ENCODE measurements at regions of chr22 and their contacts with region 1.

Region 1: DNA sequence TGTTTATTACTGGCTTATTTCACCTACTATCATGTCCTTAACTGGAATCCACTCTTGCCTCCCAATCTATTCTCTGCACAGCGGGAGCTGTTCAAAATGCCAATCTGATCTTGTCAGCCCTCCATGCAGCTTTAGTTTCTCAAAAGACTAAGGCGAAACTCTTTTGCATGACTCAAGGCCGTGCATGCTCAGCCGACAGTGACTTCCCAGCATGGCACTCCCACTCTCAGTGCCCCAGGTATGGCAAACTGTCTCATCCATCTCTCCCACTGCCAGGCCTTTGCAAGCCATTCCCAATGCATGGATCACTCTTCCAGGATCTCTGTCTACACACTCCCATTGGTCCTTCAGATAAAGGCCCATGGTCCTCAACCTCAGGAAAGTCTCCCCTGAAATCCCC is 245.9 kb downstream of the LARGE1 start:
- DNase-seq: no peak
- H3K4me3 ChIP-seq: no peak overlapping the region
- H3K27ac ChIP-seq: no peak overlapping the region
- H3K4me1 ChIP-seq: no peaks in the 10 kb centered on the region
- H3K27me3 ChIP-seq: no peaks in the 10 kb centered on the region
- CTCF ChIP-seq: no peak
- POLR2A ChIP-seq: no peak

Region 2: GRCh38 chr22:33832558-33833151 is 158.3 kb after region 1 on chr22:
- intact Hi-C with region 1: no loop called
- DNase-seq: no peak
- H3K4me3 ChIP-seq: no peak overlapping the region
- H3K27ac ChIP-seq: no peak overlapping the region
- H3K4me1 ChIP-seq: no peaks in the 10 kb centered on the region
- H3K27me3 ChIP-seq: no peaks in the 10 kb centered on the region
- CTCF ChIP-seq: no peak
- POLR2A ChIP-seq: no peak

Region 3: GRCh38 chr22:34526681-34527080 is 852.3 kb after region 1 on chr22:
- intact Hi-C with region 1: loop called (anchors 5 kb)
- DNase-seq: no peak
- H3K4me3 ChIP-seq: no peak overlapping the region
- H3K27ac ChIP-seq: no peak overlapping the region
- H3K4me1 ChIP-seq: no peaks in the 10 kb centered on the region
- H3K27me3 ChIP-seq: peaks cover 0 to 3% of the 10 kb centered on the region in 2 donors
- CTCF ChIP-seq: no peak
- POLR2A ChIP-seq: no peak